GM10248 (cell line): ENCODE measurements at regions of chr2 and their contacts with region 1.

Region 1: DNA sequence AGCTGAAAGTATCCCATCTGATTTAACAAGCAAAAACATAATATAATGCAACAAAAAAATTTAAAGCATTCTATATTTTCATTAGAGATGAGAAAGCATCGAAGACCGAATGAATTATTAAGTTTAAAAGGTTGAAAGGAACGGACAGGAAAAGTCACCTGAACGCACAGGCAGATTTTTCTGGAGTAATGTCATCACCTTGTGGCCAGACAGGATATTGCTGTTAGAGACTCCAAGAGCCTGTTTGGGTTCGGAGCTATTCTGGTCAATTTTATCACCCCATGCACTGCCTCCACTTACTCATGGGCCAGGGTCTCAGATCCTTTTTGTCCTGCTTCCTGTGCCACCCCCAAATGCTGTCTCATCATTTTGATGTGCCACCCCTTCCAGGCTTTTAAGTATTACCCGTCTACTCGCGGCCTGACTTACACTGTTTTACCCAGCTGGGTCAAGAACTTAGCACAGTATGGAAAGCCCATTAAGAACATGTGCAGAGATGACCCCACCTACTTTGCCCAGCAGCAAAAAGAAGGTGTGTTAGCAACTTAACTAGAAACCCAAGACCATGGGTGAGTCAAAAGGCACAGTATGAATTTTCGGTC is 27.3 kb downstream of the GKN2 start:
- DNase-seq: peak; percentile 58
- CTCF ChIP-seq: peak; percentile 86

Region 2: DNA sequence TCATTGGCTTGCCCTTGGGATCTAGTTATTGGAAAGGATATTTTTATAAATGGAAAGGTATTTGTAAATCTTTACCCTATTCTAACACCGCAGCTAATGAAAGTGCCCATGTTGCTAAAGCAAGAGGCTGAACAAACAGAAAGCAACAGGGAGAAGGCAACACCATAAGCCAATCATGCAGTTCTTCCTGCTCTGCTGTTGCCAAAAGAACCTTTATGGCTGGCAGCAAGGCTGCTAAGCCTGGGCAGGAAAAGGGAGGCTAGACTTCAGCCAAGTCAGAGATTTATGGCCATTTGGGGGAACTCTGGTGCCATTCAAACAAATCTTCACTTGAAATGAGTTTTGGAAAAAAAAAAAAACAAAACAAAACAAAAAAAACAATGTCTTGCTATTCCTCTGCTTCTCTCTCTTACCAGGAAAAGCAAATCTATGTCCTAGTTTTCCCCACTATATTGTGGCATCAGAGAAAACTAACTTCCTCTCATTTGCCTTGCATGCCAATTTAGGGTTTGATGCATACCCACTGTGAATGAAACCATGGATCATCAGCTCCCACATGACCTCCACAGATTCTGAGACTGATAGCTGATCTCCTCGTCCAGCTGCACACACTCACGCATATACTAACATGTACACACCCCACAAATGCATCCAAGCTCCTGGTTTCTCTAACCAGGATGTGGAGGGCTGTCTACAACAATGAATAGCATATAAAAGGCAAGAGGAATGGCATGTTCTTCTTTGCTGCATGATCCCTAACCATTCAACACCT is 1041.9 kb before region 1 on chr2:
- CTCF ChIA-PET with region 1: no interaction called
- POLR2A ChIA-PET with region 1: no interaction called
- DNase-seq: no peak
- CTCF ChIP-seq: no peak

Region 3: DNA sequence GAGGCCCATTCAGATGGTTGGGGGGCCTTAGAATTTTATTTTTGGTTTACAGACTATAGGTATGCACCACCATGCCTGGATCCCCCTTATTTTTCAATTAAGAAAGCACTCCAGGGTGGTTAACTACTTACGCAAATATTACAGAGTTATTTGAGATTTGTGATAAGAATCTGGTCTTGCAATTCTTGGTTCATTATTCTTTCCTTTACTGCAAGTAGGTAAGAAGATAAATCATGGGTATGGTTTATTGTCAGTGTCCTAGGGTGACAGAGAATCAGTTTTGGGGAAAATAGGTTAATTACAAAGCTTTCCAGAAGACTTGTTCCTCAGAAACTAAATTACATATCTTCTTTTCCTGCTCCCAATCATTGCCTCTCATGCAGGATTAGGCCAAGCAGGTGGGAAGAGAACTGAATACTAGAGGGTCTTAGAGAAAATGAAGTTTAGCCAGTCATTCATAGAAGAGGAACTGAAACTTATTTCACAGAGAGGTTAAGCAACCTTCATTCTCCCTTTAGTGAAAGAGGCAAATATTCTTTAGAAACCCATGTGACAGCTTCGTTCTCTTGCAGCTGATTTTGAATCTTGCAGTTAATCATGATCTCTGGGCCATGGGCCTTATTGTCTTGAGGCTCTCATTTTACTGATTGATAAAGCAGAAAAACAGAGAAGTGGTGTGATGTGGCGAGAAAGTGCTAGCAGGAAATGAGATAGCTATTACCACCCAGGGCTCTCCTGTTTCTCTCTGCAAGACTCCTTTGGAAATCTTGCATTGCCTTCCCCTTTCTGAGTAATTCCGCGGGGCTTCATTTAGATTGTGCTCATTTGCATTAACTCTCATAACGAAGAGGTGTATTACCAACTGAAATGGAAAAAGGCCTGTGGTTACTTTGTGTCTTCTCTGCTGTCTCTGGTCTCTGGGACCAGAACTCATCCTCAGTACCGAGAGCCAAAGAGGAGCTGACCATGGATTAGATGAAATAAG is 235.6 kb before region 1 on chr2:
- CTCF ChIA-PET with region 1: interaction called, 19 read pairs
- POLR2A ChIA-PET with region 1: no interaction called
- DNase-seq: peak; percentile 68
- CTCF ChIP-seq: no peak

Region 4: GRCh38 chr2:68715353-68716041 is 209.9 kb before region 1 on chr2:
- CTCF ChIA-PET with region 1: interaction called, 11 read pairs
- POLR2A ChIA-PET with region 1: no interaction called
- DNase-seq: peak; percentile 49
- CTCF ChIP-seq: peak; percentile 66

Region 5: GRCh38 chr2:68744366-68744912 is 181.0 kb before region 1 on chr2:
- CTCF ChIA-PET with region 1: interaction called, 54 read pairs
- POLR2A ChIA-PET with region 1: no interaction called
- DNase-seq: no peak
- CTCF ChIP-seq: no peak

Region 6: GRCh38 chr2:68901199-68901960 is 24.0 kb before region 1 on chr2:
- CTCF ChIA-PET with region 1: interaction called, 10 read pairs
- POLR2A ChIA-PET with region 1: no interaction called
- DNase-seq: no peak
- CTCF ChIP-seq: peak; percentile 16

Region 7: DNA sequence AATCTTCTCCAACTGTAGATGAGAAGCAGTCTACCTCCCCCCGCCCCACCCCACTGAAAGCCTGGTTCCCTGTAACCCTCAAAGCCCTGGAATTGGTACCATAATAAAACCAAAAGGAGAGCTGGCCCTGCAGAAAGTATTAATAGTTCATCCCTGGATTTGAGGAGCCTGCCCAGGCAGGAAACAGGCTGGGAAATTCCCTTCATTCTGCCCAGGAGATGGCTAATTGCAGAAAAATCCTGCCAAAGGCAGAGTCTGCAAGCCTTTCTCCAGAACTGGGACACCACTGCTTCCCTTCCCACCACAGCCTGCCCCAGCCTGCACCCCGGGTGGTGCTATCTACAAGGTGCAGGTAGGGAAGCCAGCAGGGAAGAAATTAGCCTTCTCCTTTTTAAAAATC is 11.0 kb after region 1 on chr2:
- CTCF ChIA-PET with region 1: interaction called, 42 read pairs
- POLR2A ChIA-PET with region 1: no interaction called
- DNase-seq: no peak
- CTCF ChIP-seq: no peak